Activated T-helper 2 cell treated with anti-CD3 and anti-CD28 coated beads, Interferon-gamma antibody, Interleukin-2, Interleukin-4, amounts not matched to agents 10 μg/mL and 5 μg/mL and 100 μg/mL, durations not matched to agents 14 hours and 24 hours and 36 hours (primary cell): ENCODE measurements at regions of chr11 and their contacts with region 1.

Region 1: GRCh38 chr11:69642913-69643632 is 2.1 kb downstream of the CCND1 start:
- DNase-seq: peak; percentile 64
- H3K4me3 Mint-ChIP-seq: peak overlapping the region; percentile 56
- H3K27ac Mint-ChIP-seq: no peak overlapping the region
- H3K4me1 Mint-ChIP-seq: peaks cover 3% of the 10 kb centered on the region
- H3K27me3 Mint-ChIP-seq: peaks cover 27% of the 10 kb centered on the region

Region 2: DNA sequence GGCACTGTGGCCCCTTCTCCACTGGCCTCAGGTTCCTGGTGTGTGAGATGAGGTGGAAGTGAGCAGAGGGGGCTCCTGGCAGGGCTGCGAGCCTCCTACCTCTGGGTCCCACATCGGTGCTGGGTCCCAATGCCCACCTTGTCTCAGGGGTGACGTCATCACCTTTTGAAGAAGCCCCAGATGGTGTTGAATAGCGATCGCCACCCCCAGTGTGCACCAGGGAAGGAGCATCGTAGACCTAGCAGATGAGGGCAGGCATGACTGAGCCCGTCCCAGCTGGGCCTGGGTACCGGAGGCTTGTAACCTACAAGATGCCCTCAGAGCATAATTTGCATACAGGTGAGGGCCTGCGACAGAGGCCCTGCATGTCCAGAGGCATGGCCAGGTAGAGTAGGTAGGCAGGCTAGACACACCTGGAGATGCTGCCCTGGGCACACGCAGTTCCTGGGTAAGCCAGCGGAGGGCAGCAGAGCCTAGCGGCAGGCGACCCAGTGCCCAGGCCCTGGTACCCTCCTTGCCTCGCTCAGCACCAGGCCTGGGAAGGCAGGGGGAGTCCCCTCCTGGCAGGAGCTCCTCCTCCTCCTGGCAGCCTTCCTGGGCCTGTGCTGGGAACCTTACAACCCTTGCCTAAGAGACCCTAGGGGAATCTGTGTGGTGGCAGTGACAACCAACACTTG is 541.8 kb before region 1 on chr11:
- intact Hi-C with region 1: loop called (anchors 1 kb)
- DNase-seq: peak; percentile 52
- H3K4me3 Mint-ChIP-seq: no peak overlapping the region
- H3K27ac Mint-ChIP-seq: no peak overlapping the region
- H3K4me1 Mint-ChIP-seq: no peaks in the 10 kb centered on the region
- H3K27me3 Mint-ChIP-seq: no peaks in the 10 kb centered on the region

Region 3: DNA sequence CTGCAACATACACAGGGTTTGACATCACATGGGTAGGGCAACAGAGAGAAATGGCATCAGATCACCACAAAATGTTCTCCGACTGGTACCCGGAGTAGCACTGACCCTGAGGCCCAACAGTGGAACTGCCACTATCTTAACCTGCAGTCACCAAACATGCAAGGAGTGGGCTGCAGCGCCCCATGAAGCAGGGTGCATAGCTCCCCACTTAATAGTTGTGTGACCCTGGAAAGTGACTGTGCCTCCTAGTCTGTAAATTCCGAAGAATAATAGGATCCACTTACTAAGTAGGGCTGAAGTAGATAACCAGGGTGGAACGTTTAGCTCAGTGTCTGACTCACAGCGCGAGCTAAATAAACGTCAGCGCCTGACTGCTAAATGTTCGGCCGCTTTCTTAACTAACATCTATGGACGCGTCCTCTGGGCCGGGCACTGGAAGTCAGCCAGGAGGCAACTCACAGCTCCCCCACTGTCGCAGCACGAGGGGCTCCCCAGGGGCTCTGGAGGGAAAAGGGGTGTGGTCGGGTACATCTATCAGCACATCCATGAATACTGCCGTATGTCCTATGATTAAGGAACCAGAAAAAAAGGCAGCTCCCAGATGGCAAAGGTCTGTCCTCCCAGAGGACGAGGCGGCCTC is 31.3 kb after region 1 on chr11:
- intact Hi-C with region 1: loop called (anchors 2 kb)
- DNase-seq: no peak
- H3K4me3 Mint-ChIP-seq: peak overlapping the region; percentile 96
- H3K27ac Mint-ChIP-seq: peak overlapping the region; percentile 83
- H3K4me1 Mint-ChIP-seq: peaks cover 21% of the 10 kb centered on the region
- H3K27me3 Mint-ChIP-seq: peaks cover 8% of the 10 kb centered on the region

Region 4: DNA sequence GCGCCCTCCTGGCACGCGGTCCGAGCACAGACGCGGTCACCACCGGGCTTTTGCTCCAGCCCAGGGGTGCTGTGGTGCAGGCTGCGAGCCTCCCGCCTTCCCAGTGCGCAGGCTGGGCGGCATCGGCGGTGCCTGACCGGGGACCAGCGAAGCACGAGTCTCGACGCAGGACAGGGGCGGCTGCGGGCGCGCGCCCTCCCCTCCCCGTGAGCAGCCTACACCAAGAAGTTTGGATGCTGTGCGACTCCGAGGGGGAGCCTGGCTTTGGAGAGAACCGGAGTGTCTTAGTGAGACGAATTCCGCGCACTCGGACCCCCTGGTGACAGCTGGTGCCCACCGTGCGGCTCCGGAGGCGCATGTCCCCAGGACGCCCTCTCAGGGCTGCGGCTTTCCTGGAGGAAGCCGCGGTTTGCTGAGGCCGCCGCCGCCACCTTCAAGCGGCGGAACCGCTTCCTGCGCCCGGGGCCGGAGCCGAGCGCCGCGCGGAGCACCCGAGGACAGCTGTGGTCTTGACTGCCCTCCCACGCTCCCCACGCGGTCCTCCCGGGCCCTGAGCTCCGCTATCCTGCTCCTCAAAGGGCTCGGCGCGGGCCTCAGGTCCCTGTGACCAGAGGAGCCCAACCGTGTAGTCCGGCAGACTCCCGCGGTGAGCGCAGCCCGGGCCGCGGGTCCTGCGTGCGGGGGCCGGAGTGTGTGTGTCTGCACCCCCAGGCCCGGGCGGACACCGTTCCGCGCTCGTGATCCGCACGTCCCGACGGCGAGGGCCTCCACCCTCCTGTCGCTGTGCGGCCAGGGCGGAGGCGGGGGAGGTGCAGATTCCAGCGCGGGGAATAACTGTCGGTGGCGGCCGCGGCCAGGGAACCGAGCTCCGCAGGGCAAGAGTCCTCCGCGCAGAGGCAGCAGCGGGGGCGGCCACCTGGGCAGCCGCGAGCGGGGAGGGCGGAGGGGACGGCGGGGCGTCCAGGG is 174.5 kb after region 1 on chr11:
- intact Hi-C with region 1: loop called (anchors 2 kb)
- DNase-seq: no peak
- H3K4me3 Mint-ChIP-seq: no peak overlapping the region
- H3K27ac Mint-ChIP-seq: no peak overlapping the region
- H3K4me1 Mint-ChIP-seq: no peaks in the 10 kb centered on the region
- H3K27me3 Mint-ChIP-seq: peaks cover 40% of the 10 kb centered on the region